Activated B cell treated with CpG ODN at 0.5 μM for 24 hours (primary cell): ENCODE measurements at regions of chr9 and their contacts with region 1.

Region 1: DNA sequence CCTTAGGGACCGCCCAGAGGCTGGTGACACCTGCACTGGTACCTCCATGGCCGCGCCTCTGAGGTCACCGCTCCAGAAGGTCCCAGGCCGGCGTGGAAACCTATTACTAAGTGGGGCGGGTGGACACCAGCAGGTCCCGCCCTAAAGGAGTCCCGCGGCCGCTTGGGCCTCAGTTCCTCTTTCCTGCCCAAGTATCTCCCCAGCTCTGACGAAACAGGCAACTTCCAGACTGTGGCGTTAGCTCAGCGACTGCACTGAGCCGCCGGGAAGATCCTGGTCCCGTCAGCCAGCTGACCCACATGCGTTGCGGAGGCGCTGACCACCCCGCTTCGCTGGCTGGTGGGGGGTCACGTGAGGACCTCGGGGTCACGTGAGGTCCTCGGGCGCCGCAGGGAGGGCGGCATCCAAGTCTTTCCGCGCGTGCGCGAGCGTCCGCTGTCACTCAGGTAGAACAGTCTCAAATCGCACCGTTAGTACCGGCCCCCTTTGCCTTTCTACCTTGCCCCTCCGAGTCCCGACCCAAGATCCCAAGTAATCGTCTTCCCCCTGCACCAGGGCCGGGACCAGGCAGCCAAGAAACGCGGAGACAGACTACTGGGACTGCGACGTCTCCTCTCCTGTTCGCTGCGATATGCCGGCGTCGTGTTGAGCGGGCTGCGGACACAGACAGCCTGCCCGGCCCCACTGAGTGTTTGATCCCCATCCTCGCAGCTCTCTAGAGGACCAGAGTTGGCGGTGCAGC is 53.7 kb upstream of the KDM4C start:
- DNase-seq: peak; percentile 71
- ATAC-seq: peak; percentile 84
- H3K4me3 Mint-ChIP-seq: peak overlapping the region; percentile 93
- H3K27ac Mint-ChIP-seq: peak overlapping the region; percentile 98
- H3K4me1 Mint-ChIP-seq: peaks cover 22% of the 10 kb centered on the region
- H3K27me3 Mint-ChIP-seq: no peaks in the 10 kb centered on the region
- CTCF ChIP-seq: no peak

Region 2: GRCh38 chr9:6686396-6686795 is 17.7 kb before region 1 on chr9:
- CTCF ChIA-PET with region 1: no interaction called
- POLR2A ChIA-PET with region 1: interaction called, 77 read pairs
- intact Hi-C with region 1: loop called (anchors 1 kb)
- DNase-seq: no peak
- ATAC-seq: no peak
- H3K4me3 Mint-ChIP-seq: peak overlapping the region; percentile 50
- H3K27ac Mint-ChIP-seq: peak overlapping the region; percentile 84
- H3K4me1 Mint-ChIP-seq: peaks cover 75% of the 10 kb centered on the region
- H3K27me3 Mint-ChIP-seq: no peaks in the 10 kb centered on the region
- CTCF ChIP-seq: no peak

Region 3: DNA sequence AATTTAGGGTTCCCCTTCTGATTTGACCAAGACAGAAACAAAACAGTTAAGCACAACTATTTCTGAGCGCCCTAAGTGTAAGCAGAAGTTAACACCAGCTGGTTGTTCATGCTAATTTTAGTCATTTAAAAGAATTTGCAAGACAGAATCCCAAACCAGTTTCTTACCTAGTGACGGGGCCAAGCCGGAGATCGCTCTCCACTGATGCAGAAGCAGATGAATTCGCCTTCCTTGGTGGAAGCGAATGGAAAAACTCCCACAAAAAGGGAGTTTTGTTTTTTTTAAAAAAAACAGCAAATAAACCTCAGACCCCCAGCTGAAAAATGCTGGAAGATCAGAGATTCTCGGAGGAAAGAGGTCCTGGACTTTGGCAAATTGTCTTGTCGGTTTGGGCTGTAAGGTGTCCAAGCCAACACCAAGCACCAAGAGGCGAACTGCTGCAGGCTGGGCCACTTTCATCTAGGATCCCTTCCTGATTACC is 11.1 kb before region 1 on chr9:
- CTCF ChIA-PET with region 1: no interaction called
- POLR2A ChIA-PET with region 1: interaction called, 23 read pairs
- intact Hi-C with region 1: loop called (anchors 1 kb)
- DNase-seq: no peak
- ATAC-seq: peak; percentile 14
- H3K4me3 Mint-ChIP-seq: peak overlapping the region; percentile 74
- H3K27ac Mint-ChIP-seq: peak overlapping the region; percentile 95
- H3K4me1 Mint-ChIP-seq: peaks cover 79% of the 10 kb centered on the region
- H3K27me3 Mint-ChIP-seq: no peaks in the 10 kb centered on the region
- CTCF ChIP-seq: no peak

Region 4: GRCh38 chr9:6984941-6985578 is 281.0 kb after region 1 on chr9:
- CTCF ChIA-PET with region 1: no interaction called
- POLR2A ChIA-PET with region 1: no interaction called
- intact Hi-C with region 1: no loop called
- DNase-seq: no peak
- ATAC-seq: no peak
- H3K4me3 Mint-ChIP-seq: no peak overlapping the region
- H3K27ac Mint-ChIP-seq: no peak overlapping the region
- H3K4me1 Mint-ChIP-seq: no peaks in the 10 kb centered on the region
- H3K27me3 Mint-ChIP-seq: no peaks in the 10 kb centered on the region
- CTCF ChIP-seq: no peak